Activated CD4-positive, alpha-beta T cell treated with anti-CD3 and anti-CD28 coated beads, Interleukin-2, amount 10 ng/mL, durations not matched to agents 24 days and 14 days (primary cell): ENCODE measurements at regions of chr6 and their contacts with region 1.

Region 1: DNA sequence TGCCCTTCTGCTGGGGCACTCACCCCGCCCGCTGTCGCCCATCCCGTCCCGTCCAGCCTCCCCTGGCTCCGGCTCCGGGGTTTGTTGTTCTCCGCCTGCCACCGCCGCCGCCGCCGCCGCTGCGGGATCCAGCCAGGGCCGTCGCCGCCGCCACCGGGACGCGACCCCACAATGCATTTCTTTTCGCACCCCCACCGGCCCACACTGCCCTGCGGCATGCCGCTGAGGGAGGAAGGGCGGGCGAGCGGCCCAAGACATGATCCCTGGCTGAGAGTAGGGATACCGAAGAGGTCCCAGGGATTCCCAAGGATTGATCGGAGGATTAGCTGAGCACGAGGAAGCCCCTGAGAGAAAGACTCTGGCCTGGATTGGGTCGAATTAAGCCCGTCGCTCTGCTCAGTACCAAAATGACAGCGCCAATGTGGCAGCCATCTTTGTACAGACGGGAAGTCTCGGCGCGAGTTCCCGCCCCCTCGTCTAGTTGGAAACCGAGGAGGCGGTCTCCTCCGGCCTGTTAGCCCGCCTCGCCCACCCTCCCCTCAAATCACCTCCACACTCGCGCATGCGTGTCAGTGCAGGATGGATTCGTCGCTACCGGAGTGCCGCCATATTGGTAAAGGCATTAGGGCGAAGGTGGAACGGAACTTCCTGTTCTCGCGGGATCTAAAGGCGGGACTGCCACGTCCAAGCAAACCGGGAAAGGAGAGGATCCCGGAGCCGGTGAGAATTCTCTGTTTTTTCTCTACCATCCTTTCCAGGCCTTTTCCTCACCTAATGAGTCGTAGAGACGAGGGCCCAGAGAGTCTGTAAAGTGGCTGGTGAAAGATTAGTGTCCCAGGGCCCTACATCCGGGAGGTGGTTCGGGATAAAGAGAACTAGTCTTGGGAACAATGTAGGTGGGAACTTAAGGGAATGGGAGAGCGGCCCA is at the starts of genes RXRB and SLC39A7:
- DNase-seq: peak; percentile 99
- H3K4me3 Mint-ChIP-seq: peak within 1 kb of the TSS; percentile 100
- H3K27ac Mint-ChIP-seq: peak within 1 kb of the TSS; percentile 97
- H3K4me1 Mint-ChIP-seq: peaks cover 62% of the 10 kb centered on the region
- H3K27me3 Mint-ChIP-seq: no peaks in the 10 kb centered on the region
- total RNA-seq, gene RXRB: 46.6 and 48.0 TPM in 2 replicates
- total RNA-seq, gene SLC39A7: 61.7 and 63.9 TPM in 2 replicates

Region 2: DNA sequence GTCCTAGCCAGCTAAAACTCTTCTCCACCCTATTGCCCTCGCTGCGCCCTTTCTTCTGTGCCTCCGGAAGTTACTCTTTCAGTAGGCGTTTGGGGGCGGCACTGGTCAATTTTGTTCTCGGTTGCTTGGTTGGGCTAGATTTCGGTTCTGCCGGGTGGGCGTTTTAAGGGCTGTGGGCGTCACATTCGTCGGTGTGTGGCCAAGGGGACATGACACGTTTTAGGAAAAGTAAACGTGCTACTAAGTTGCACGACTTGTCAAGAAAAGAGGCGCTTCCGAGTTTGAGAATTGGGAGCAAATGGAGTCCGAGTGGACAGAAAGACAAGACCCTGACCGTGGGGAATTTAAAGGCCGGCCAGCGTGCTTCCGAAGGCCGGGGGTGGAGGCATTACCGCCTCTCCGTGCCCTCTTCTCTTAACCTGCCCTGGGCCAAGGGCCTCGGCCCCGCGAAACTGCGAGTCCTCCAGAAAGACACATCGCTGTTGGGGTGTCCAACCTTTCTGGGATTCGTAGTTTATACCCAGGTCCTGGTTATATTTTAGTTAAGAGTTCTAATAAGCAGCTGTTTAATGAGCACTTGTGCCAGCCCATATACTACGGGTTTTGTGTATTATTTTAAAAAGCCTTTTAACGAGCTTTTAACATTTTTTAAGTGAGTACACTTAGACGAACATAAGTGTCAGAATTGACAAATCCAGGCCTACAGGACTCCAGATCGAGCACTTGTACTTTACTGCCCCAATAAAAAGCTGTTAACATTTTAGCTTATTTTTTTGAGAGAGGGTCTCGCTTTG is 1547.4 kb before region 1 on chr6:
- intact Hi-C with region 1: loop called (anchors 2 kb)
- DNase-seq: no peak
- H3K4me3 Mint-ChIP-seq: peak overlapping the region; percentile 94
- H3K27ac Mint-ChIP-seq: peak overlapping the region; percentile 100
- H3K4me1 Mint-ChIP-seq: peaks cover 58% of the 10 kb centered on the region
- H3K27me3 Mint-ChIP-seq: peaks cover 3% of the 10 kb centered on the region

Region 3: DNA sequence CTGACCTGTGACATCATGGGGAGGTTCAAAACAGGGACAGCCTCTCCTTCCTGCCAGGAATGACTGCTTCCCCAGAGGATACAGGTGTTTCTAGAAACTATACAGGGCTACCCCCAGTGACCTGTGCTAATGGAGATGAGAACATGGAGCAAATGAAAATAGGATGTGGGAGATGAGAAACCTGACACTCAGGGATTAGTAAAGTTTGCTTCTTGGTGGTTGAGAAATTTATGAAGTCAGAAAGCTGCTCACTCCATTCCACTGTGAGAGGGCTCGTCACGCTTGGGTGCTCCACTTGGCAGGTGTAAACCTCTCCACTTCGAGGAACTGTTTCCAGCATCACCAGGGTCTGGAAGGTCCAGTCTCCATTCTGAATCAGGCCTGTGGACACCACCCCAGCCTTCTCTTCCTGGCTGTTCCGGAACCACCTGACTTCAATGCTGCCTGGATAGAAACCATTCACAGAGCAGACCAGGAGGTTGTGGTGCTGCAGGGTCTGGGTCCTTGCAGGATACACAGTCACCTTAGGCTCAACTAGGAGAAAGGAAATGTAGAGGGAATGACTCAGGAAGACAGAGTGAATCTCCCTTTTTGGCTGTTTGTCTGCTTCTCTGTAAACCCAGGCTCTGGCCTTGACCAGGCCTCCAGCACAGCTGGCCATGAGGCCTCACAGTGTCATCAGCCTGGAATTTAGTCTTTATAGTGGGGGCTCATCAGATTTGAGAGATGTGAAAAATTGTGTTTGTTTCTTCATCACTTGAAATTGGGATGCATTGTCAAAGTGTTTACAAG is 681.2 kb before region 1 on chr6:
- intact Hi-C with region 1: no loop called
- DNase-seq: no peak
- H3K4me3 Mint-ChIP-seq: no peak overlapping the region
- H3K27ac Mint-ChIP-seq: no peak overlapping the region
- H3K4me1 Mint-ChIP-seq: no peaks in the 10 kb centered on the region
- H3K27me3 Mint-ChIP-seq: peaks cover 19% of the 10 kb centered on the region

Region 4: DNA sequence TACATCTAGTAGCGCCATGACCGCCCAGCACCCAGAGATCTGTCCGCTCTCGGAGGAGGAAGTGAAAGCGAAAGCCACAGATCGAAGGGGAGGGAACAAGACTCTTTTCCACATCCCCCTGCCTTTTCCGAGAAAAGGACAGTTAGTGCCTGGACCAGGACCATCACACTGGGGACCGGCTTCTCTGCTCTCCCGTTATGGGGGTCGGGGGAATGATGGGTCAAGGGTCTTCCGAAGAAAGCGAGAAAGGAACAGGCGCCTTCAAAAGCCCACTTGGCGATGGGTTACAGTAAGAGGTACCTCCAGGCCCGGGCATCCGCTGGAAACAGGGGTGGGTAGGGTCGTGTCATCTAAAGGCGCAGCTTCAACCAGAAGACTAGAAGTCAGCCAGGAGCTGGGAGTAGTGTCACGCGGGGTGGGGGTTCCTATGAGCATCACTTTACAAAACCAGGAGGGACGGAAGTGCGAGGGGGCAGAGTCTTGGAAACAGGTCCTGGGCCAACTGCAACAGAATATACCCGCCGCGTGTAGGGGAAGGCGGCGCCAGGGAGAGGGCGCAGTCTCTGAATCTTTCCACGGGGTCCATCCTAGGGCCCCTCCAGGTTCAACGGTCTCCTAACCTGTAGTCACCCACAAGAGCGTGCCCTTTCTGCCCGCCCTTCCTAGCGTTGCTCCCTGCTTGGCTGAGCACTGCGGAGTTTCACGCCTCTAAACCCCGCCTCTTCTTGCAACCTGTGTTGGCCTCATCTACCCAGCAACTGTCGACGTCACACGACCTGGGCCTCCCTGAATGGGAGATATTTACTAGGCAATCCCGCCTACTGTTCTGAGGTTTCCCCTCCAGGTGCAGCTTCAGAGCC is 356.3 kb before region 1 on chr6 and contains the start of gene PSMB8:
- intact Hi-C with region 1: loop called (anchors 2 kb)
- DNase-seq: peak; percentile 99
- H3K4me3 Mint-ChIP-seq: peak within 1 kb of the TSS; percentile 99
- H3K27ac Mint-ChIP-seq: peak within 1 kb of the TSS; percentile 99
- H3K4me1 Mint-ChIP-seq: peaks cover 73% of the 10 kb centered on the region
- H3K27me3 Mint-ChIP-seq: no peaks in the 10 kb centered on the region
- total RNA-seq, gene PSMB8: 342 and 353 TPM in 2 replicates

Region 5: DNA sequence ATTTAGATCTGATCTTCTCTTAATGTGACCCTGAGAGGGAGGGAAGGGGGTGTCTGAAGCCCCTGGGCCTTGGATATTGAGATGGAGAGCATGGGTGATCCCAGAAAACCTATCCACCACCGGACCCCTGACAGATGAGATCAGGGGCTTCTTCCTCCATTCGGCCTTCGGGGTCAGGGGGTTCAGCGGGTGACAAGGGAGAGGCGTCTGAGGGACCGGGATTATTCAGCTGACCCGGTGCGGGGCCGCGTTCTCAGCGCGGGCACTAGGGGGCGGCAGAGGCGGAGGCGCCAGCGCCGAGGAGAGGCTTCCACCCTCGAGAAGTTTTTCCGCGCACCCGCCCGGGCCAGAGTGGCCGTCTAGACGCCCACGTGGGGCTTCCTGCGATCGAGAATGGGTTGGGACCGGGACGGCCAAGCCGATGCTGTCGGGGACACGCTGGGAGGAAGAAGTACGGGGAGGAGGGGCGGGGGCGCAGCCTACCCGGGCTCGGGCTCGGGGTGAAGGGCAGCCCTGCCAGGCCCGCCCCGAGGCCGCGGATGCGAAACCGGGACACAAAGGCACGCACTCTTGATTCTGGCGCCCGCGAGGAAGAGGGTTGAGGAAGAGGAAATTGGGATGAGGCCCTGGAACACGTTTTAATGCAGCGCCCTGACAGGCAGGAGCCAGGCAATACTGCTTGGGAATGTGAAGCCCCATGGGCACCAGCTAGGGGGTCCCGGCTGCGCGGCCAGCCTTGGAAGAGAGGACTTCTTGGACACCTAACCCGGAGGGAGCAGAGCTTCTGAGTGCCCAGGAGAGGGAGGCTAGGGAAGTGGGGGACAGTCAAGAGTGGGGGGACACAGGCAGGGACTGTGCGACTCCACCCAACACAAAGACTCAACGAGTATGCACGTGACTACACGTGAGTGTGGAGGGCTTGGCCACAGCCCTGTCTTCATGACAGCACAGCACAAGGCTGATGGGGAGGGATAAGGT is 38.8 kb before region 1 on chr6:
- intact Hi-C with region 1: loop called (anchors 2 kb)
- DNase-seq: peak; percentile 96
- H3K4me3 Mint-ChIP-seq: peak overlapping the region; percentile 87
- H3K27ac Mint-ChIP-seq: peak overlapping the region; percentile 86
- H3K4me1 Mint-ChIP-seq: peaks cover 14% of the 10 kb centered on the region
- H3K27me3 Mint-ChIP-seq: peaks cover under 1% of the 10 kb centered on the region

Region 6: GRCh38 chr6:33288921-33289748 is 88.7 kb after region 1 on chr6 and contains the starts of genes PFDN6 and WDR46:
- intact Hi-C with region 1: loop called (anchors 1 kb)
- DNase-seq: peak; percentile 95
- H3K4me3 Mint-ChIP-seq: peak within 1 kb of the TSS; percentile 100
- H3K27ac Mint-ChIP-seq: peak within 1 kb of the TSS; percentile 95
- H3K4me1 Mint-ChIP-seq: peaks cover 28% of the 10 kb centered on the region
- H3K27me3 Mint-ChIP-seq: no peaks in the 10 kb centered on the region
- total RNA-seq, gene PFDN6: 114 and 132 TPM in 2 replicates
- total RNA-seq, gene WDR46: 106 and 120 TPM in 2 replicates

Region 7: GRCh38 chr6:33417903-33418689 is 217.6 kb after region 1 on chr6 and contains the start of gene CUTA:
- intact Hi-C with region 1: loop called (anchors 1 kb)
- DNase-seq: peak; percentile 100
- H3K4me3 Mint-ChIP-seq: peak within 1 kb of the TSS; percentile 92
- H3K27ac Mint-ChIP-seq: peak within 1 kb of the TSS; percentile 96
- H3K4me1 Mint-ChIP-seq: peaks cover 63% of the 10 kb centered on the region
- H3K27me3 Mint-ChIP-seq: peaks cover 1% of the 10 kb centered on the region
- total RNA-seq, gene CUTA: 120 and 124 TPM in 2 replicates